MCF 10A (cell line): ENCODE measurements at regions of chr4 and their contacts with region 1.

Region 1: DNA sequence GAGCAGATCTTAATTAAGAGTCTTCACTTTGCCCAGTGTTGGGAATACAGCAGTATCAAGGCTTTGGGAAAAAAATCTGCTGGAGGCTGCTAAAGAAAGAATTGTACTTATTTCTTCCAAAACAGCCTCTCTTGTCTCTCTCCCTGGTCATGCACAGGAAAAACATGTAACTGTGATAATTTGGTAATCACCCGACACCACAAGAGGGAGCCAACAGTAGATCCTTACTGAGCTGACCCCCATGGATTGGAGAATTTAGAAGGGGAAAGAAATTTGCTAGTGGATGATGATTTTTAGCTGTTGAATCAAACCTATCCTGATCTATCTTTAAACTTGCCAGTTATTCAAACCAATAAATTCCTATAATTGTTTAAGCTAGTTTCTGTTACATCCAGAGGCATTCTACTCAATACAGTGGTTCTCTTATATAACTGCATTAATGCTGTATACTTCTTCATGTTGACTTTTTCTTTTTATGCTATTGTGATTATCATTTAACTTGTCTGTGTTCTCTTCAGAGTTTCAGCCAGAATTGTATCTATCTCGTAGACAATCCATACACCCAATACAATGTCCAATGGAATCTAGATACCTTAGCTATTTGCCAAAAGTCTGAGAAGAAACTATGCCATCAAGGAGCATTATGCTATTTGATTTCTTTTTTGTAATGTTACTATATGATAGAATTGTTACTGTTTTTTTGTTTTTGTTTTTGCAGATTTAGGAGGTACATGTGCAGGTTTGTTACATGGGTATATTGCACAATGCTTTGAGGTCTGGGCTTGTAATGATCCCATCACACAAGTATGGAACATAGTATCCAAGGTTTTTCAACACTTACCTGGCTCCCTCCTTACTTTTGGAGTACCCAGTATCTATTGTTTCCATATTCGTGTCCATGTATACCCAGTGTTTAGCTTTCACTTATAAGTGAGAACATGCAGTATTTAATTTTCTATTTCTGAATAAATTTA is 31.3 kb upstream of the ARHGEF38 start:
- DNase-seq: peak; percentile 66
- H3K4me3 Mint-ChIP-seq: no peak overlapping the region
- H3K27ac Mint-ChIP-seq: no peak overlapping the region
- H3K4me1 Mint-ChIP-seq: peaks cover 8% of the 10 kb centered on the region
- H3K27me3 Mint-ChIP-seq: no peaks in the 10 kb centered on the region
- CTCF ChIP-seq: peak; percentile 65

Region 2: GRCh38 chr4:105544520-105545286 is 23.6 kb after region 1 on chr4:
- CTCF ChIA-PET with region 1: interaction called, 15 read pairs
- POLR2A ChIA-PET with region 1: interaction called, 3 read pairs
- intact Hi-C with region 1: no loop called
- DNase-seq: no peak
- H3K4me3 Mint-ChIP-seq: no peak overlapping the region
- H3K27ac Mint-ChIP-seq: no peak overlapping the region
- H3K4me1 Mint-ChIP-seq: no peaks in the 10 kb centered on the region
- H3K27me3 Mint-ChIP-seq: no peaks in the 10 kb centered on the region
- CTCF ChIP-seq: no peak

Region 3: DNA sequence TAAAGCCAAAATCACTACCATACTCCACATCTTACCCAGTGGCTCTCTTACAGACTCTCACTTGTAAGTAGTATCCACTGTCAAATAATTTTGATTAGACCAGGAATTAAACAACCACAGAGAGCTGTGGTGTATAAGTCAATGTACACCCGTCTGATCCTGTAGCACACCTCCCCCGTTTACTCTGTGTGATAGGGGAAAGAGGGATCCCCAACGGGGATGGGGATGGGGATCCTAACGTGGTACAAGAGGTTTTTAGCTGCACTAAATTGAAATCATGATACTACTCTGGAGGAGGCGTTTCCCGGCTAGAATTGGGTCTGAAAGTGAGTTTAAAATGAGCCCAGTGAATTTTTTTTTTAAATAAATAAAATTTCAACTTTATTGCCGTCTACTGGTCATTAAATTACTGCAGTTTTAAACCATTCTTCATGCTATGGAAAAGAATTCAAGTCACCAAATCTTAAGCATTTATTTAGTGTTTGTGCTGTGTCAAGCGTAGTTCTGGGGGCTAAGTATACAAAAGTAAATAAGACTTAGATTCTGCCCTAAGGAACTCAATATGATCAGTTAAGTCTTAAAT is 110.8 kb after region 1 on chr4:
- CTCF ChIA-PET with region 1: interaction called, 56 read pairs
- POLR2A ChIA-PET with region 1: interaction called, 5 read pairs
- intact Hi-C with region 1: loop called (anchors 1 kb)
- DNase-seq: peak; percentile 26
- H3K4me3 Mint-ChIP-seq: no peak overlapping the region
- H3K27ac Mint-ChIP-seq: no peak overlapping the region
- H3K4me1 Mint-ChIP-seq: peaks cover 5% of the 10 kb centered on the region
- H3K27me3 Mint-ChIP-seq: no peaks in the 10 kb centered on the region
- CTCF ChIP-seq: peak; percentile 25

Region 4: DNA sequence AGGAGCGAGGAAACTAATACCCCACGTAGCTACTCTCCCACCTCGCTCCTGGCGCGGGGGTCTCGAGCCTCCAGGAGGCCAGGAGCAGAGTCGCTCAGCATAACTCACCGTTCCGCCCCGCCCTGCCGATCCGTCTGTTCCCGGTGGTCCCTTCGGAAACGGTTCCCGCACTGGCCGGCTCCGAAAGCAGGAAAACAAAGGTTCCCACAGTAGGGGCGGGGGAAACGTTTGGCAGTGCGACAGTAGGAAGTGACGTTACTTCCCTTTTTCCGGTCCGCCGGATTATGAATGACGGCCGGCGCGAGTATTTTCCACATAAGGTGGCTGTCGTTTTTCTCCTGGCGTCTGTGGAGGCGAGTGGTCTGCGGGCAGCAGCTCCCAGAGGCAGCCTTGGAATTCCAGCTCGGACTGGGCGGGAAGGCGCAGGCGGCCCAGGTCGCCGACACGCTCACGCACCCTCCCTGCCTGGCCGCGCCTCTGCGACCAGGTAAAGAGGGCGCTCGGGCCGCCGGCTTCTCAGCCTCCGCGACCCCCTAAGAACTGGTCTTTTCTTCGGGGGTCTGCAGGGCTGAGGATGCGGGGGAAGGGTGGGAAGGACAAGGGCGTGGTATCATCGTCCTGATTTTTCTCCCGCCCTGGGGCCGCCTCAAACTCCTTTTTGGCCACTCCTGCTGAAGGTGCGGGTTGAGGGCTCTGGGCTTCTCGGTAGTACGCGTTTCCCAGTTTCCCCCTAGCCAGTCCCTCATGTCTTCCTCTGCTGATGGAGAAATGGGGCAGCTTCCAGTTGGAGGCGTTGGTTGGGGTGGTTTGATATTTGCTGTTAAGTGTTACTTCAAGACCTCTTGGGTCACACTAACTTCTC is 187.7 kb after region 1 on chr4 and contains the starts of genes GSTCD and INTS12:
- CTCF ChIA-PET with region 1: interaction called, 19 read pairs
- POLR2A ChIA-PET with region 1: interaction called, 3 read pairs
- intact Hi-C with region 1: no loop called
- DNase-seq: peak; percentile 93
- H3K4me3 Mint-ChIP-seq: peak within 1 kb of the TSS; percentile 86
- H3K27ac Mint-ChIP-seq: peak within 1 kb of the TSS; percentile 91
- H3K4me1 Mint-ChIP-seq: peaks cover 28% of the 10 kb centered on the region
- H3K27me3 Mint-ChIP-seq: no peaks in the 10 kb centered on the region
- CTCF ChIP-seq: no peak
- total RNA-seq, gene GSTCD: 16.3 and 19.2 TPM in 2 replicates
- total RNA-seq, gene INTS12: 34.5 and 40.0 TPM in 2 replicates

Region 5: GRCh38 chr4:106201373-106201772 is 680.3 kb after region 1 on chr4:
- CTCF ChIA-PET with region 1: interaction called, 3 read pairs
- POLR2A ChIA-PET with region 1: no interaction called
- intact Hi-C with region 1: loop called (anchors 2 kb)
- DNase-seq: peak; percentile 27
- H3K4me3 Mint-ChIP-seq: no peak overlapping the region
- H3K27ac Mint-ChIP-seq: no peak overlapping the region
- H3K4me1 Mint-ChIP-seq: no peaks in the 10 kb centered on the region
- H3K27me3 Mint-ChIP-seq: no peaks in the 10 kb centered on the region
- CTCF ChIP-seq: peak; percentile 52